ENCODE measurements at regions of chr4 and their contacts with region 1.

Region 1: DNA sequence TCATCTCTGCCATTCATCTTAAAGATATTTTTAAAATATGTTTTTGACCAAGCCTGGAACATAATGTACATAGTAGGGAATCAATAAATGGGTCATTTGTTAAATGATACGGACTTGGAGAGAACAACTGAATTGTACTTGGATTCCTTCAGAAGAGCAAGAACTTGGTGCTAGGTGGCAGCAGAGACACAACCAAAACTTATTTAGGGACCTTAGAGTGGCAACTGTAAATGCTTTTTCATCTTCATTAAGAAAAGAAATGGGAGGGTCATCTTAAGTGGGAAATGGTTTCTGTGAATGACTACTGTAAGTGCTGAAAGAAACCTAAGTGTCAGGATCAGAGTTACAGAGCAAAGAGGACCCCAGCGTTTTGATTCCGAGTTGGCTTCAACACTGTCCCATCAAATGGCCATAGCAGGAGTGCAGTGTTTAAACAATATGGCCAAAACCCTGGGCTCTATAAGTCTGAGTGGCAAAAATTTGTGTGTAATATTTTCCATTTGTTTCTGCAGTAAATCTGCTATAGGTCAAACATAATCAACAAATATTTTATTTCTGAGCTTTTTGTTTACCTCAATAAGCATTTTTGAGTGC is 213.6 kb downstream of the PALLD start:
- DNase-seq: no peak
- H3K4me3 ChIP-seq: no peak overlapping the region
- H3K27ac ChIP-seq: no peak overlapping the region
- H3K4me1 ChIP-seq: no peaks in the 10 kb centered on the region
- H3K27me3 ChIP-seq: peaks cover 0 to 3% (median 0%) of the 10 kb centered on the region in 4 experiments; a peak in 2 of 7 replicates
- CTCF ChIP-seq: peak in 2 of 3 experiments; percentile 54 to 66; a peak in 3 of 4 replicates
- EP300 ChIP-seq: no peak
- POLR2A ChIP-seq: no peak
- RAD21 ChIP-seq: peak; percentile 83 to 87

Region 2: GRCh38 chr4:168900080-168900479 is 189.6 kb after region 1 on chr4:
- CTCF ChIA-PET with region 1: interaction called, 17 read pairs
- POLR2A ChIA-PET with region 1: no interaction called
- DNase-seq: no peak
- H3K4me3 ChIP-seq: no peak overlapping the region
- H3K27ac ChIP-seq: no peak overlapping the region
- H3K4me1 ChIP-seq: no peaks in the 10 kb centered on the region
- H3K27me3 ChIP-seq: no peaks in the 10 kb centered on the region; a peak in 1 of 7 replicates
- CTCF ChIP-seq: no peak
- EP300 ChIP-seq: no peak
- POLR2A ChIP-seq: no peak
- RAD21 ChIP-seq: no peak

Region 3: GRCh38 chr4:168917138-168917779 is 206.8 kb after region 1 on chr4:
- CTCF ChIA-PET with region 1: interaction called, 84 read pairs
- POLR2A ChIA-PET with region 1: no interaction called
- DNase-seq: no peak
- H3K4me3 ChIP-seq: no peak overlapping the region
- H3K27ac ChIP-seq: no peak overlapping the region
- H3K4me1 ChIP-seq: peaks cover 0 to 14% (median 9%) of the 10 kb centered on the region in 4 experiments; a peak in 4 of 7 replicates
- H3K27me3 ChIP-seq: no peaks in the 10 kb centered on the region
- CTCF ChIP-seq: peak in 2 of 3 experiments; percentile 21 to 29; a peak in 2 of 4 replicates
- EP300 ChIP-seq: no peak
- POLR2A ChIP-seq: no peak
- RAD21 ChIP-seq: peak; percentile 43 to 48; a peak in 3 of 4 replicates

Region 4: GRCh38 chr4:168995537-168996295 is 285.3 kb after region 1 on chr4:
- CTCF ChIA-PET with region 1: no interaction called
- POLR2A ChIA-PET with region 1: no interaction called
- DNase-seq: no peak
- H3K4me3 ChIP-seq: no peak overlapping the region
- H3K27ac ChIP-seq: no peak overlapping the region
- H3K4me1 ChIP-seq: no peaks in the 10 kb centered on the region
- H3K27me3 ChIP-seq: no peaks in the 10 kb centered on the region
- CTCF ChIP-seq: no peak
- EP300 ChIP-seq: no peak
- POLR2A ChIP-seq: no peak
- RAD21 ChIP-seq: peak; percentile 32 to 39